ENCODE measurements at regions of chr9 and their contacts with region 1.

Region 1: GRCh38 chr9:14616188-14616982 is 76.8 kb downstream of the ZDHHC21 start:
- DNase-seq: no peak
- H3K4me3 ChIP-seq: no peak overlapping the region
- H3K27ac ChIP-seq: no peak overlapping the region
- H3K4me1 ChIP-seq: peaks cover 0 to 6% (median 3%) of the 10 kb centered on the region in 4 donors
- H3K27me3 ChIP-seq: no peaks in the 10 kb centered on the region
- CTCF ChIP-seq: peak; percentile 57 to 68 (median 62)
- EP300 ChIP-seq: no peak
- POLR2A ChIP-seq: no peak

Region 2: DNA sequence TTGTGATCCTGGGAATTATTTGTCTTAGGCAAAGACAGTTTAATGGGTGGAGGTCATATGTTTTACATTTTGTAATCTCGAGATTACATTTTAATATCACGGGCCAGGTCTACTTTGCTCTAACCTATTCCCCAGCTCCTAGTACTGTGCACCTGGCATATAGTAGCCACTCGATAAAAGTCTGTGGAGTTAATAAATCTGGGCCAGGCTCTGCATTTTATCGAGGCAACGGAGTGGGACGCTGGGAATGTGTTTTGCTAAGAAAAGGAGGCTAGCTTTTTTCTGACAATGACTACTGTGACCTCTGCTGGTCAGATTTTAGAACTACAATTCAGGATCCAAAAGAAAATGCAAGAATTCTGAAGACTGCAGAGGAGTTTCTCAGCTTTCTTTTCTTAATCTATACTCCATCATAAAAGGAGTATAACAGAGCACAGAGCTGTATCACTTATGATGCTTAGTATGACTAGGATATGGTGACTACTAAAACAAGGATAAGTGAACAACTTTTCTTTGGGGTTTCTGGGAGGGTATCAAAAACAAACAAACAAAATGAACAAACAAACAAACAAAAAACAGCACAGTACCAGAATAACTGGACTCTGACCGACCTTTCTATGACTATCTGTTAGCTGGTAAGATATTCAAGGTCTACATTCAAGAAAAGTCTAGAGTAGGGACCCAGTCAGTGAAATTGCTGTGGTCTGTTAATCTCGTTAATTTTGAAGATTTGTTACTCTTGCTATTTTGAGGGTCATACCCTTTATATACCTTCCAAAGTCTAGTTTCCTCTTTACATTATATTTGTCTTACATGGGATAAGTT is 152.2 kb after region 1 on chr9:
- in situ Hi-C with region 1: loop called in 3 of 4 experiments (anchors 10 to 25 kb)
- intact Hi-C with region 1: no loop called
- DNase-seq: no peak
- H3K4me3 ChIP-seq: no peak overlapping the region
- H3K27ac ChIP-seq: no peak overlapping the region
- H3K4me1 ChIP-seq: peaks cover 0 to 4% (median 0%) of the 10 kb centered on the region in 4 donors
- H3K27me3 ChIP-seq: no peaks in the 10 kb centered on the region
- CTCF ChIP-seq: peak; percentile 63 to 74 (median 70)
- EP300 ChIP-seq: no peak
- POLR2A ChIP-seq: no peak

Region 3: GRCh38 chr9:14779566-14780022 is 163.2 kb after region 1 on chr9:
- in situ Hi-C with region 1: loop called in 3 of 4 experiments (anchors 10 to 25 kb)
- intact Hi-C with region 1: no loop called
- DNase-seq: no peak
- H3K4me3 ChIP-seq: no peak overlapping the region
- H3K27ac ChIP-seq: no peak overlapping the region
- H3K4me1 ChIP-seq: no peaks in the 10 kb centered on the region
- H3K27me3 ChIP-seq: no peaks in the 10 kb centered on the region
- CTCF ChIP-seq: no peak
- EP300 ChIP-seq: no peak
- POLR2A ChIP-seq: no peak

Measured in transverse colon (tissue), 4 donors.